ENCODE measurements at regions of chr7 and their contacts with region 1.

Region 1: DNA sequence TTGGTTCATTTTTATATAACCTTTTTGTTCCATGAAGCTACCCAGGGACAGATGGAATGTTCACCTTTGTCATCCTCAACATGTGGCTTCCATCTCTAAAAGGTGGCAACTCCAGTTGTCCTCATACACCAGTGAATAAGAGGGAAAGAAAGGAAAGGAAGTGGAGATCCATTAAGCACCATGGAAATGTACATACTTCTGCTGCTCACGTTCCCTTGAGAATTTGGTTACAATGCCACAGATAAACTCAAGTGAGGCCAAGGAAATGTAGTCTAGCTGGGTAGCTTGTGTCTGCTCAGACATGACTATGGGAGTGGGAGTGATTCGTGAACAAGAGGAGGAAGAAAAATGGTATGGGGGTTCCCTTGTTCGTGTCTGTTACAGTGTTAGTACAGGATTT is 237.1 kb upstream of the FAM3C start:
- DNase-seq: no peak
- ATAC-seq: no peak
- H3K4me3 ChIP-seq: no peak overlapping the region
- H3K27ac ChIP-seq: no peak overlapping the region
- H3K4me1 ChIP-seq: no peaks in the 10 kb centered on the region
- H3K27me3 ChIP-seq: no peaks in the 10 kb centered on the region
- CTCF ChIP-seq: no peak

Region 2: GRCh38 chr7:121853307-121853706 is 220.1 kb after region 1 on chr7:
- CTCF ChIA-PET with region 1: no interaction called
- POLR2A ChIA-PET with region 1: no interaction called
- in situ Hi-C with region 1: no loop called
- intact Hi-C with region 1: no loop called
- DNase-seq: no peak
- ATAC-seq: no peak
- H3K4me3 ChIP-seq: no peak overlapping the region
- H3K27ac ChIP-seq: no peak overlapping the region
- H3K4me1 ChIP-seq: no peaks in the 10 kb centered on the region
- H3K27me3 ChIP-seq: no peaks in the 10 kb centered on the region; the same call in 1 of the 2 replicates
- CTCF ChIP-seq: no peak

Region 3: DNA sequence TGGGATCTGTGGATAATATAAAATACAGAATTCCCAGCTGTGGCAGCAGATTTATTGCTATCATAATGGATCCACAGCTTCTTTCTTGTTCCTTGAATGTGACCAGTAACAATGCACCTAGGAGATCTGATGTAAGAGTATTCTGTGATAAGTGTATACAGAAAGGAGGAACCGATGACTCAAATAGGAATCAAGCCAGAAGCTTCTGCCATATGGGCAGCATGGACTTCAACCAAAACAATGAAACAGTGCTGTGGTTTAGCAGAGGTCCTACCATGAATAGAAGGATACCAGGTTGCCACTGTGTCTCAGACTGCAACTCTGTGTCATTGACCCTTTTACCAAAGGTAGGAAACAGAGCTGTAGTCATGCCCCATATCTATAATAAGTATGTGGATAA is 321.6 kb after region 1 on chr7:
- CTCF ChIA-PET with region 1: no interaction called
- POLR2A ChIA-PET with region 1: interaction called, 10 read pairs
- in situ Hi-C with region 1: no loop called
- intact Hi-C with region 1: no loop called
- DNase-seq: no peak
- ATAC-seq: no peak
- H3K4me3 ChIP-seq: no peak overlapping the region
- H3K27ac ChIP-seq: no peak overlapping the region
- H3K4me1 ChIP-seq: no peaks in the 10 kb centered on the region
- H3K27me3 ChIP-seq: no peaks in the 10 kb centered on the region
- CTCF ChIP-seq: no peak